Posterior cingulate gyrus (tissue), 11 donors: ENCODE measurements at regions of chr9 and their contacts with region 1.

Region 1: GRCh38 chr9:92438900-92439526 is 14.7 kb upstream of the OMD start:
- DNase-seq: no peak

Region 2: DNA sequence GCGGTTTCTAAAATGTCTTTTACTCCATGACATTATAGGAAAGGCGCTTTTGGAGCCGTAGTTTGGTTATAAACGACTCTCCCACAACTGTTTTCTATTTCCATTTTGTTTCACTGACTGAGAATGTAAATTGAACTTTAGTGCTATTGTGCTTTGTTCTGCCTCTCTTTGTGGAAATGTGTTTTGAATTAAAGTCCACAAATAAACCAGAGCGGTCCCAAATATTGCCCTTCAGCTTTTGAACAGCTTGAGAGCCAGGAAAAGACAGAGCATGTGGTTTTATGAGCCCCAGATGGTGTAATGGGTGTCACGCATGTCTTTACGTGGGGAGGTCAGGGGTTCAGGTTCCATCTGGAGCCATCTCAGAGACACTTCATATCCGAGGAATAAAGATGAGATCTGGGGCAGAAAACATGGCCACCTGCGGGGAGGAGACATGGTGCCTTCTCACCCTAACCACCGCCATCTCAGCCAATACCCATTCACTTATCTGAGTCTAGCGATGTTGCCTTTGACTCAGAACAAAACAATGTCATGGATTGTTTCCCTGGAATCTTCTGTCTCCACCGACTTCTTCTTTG is 446.5 kb before region 1 on chr9:
- intact Hi-C with region 1: no loop called
- DNase-seq: no peak

Region 3: DNA sequence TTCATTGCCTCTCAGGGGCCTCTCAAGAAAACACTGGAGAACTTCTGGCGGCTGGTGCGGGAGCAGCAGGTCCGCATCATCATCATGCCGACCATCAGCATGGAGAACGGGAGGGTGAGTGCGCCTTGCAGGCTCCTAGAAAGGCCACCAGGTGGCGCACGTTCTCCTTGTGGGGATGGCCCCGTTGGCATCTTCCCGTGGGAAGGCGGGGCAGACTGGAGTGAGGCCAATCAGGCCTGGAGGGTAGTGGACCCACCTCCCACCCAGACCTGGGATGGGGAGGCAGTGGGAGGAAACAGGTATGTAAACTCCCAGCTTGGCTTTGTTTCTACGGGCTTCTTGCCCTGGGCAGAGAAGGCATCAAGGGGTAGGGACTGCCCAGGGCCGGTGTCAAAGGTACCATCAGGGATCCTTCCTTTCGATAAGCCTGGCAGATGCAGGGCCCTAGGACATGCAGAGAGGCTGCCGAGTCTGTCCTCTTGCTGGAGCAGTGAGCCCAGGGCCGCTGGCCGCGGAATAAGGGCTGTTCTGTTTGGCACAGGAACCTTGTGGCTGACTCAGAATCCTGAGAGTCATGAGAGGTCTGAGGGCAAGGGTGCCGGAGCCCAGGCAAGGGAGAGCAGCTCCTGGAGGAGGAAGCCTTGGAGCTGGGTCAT is 304.9 kb before region 1 on chr9:
- intact Hi-C with region 1: loop called (anchors 5 kb)
- DNase-seq: peak; percentile 66 to 97 (median 84)

Region 4: DNA sequence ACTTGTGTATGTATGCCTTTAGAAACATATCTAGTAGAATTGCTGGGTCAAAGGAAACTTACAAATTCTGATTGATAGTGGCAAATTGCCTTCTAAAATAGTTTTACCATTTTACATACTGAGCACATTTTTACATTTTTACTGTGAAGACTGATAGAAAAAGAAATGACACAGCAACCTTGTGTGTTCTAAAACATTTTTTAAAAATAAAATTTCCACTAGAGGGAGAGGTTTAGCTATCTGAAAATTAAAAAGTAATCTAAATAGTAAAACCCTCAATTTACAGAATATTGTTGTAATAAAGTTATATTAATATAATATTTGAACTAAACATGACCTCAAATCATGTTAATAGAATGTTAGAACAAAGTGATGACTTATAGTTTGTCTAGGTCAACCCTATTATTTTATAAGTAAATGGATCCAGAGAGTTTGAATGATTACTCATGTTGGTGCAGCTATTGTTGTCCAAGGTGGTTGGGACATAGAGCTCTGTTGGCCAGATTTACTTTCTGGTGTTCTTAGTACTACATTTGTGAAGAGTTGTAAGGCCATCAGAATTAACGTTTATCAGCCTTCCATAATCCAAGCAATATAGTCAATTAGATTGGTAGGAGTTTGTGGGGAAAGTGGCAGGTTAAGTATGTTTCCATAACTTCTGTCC is 96.1 kb before region 1 on chr9:
- intact Hi-C with region 1: loop called (anchors 10 kb)
- DNase-seq: no peak